HAP-1 (cell line): ENCODE measurements at regions of chr2 and their contacts with region 1.

Region 1: DNA sequence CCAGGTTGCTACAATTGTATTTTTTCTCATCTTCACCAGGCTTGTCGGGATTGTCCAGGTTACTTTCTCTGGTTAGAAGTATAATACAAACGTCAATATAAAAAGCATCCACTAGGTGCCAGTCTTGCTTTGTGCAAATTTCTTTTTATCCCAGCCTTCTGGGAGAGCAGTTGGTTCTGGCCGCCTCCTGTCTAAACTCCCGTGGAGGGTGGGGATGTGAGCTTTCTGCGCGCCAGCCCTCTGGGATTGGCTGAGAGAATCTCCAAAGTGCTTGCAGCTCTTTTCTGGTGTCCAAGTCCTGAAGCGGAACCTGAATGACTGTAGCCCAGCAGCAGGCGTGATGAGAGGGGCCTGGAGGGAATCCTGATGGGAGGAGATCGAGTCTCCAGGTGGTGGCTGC is 22.4 kb upstream of the TOGARAM2 start:
- DNase-seq: peak; percentile 82 to 89
- H3K4me3 ChIP-seq: no peak overlapping the region
- H3K4me1 ChIP-seq: peaks cover 29% of the 10 kb centered on the region
- H3K27me3 ChIP-seq: no peaks in the 10 kb centered on the region

Region 2: GRCh38 chr2:28721601-28722191 is 237.0 kb before region 1 on chr2:
- in situ Hi-C with region 1: no loop called
- DNase-seq: no peak
- H3K4me3 ChIP-seq: no peak overlapping the region
- H3K4me1 ChIP-seq: peaks cover 4% of the 10 kb centered on the region; the same call in 1 of the 2 replicates
- H3K27me3 ChIP-seq: no peaks in the 10 kb centered on the region

Region 3: DNA sequence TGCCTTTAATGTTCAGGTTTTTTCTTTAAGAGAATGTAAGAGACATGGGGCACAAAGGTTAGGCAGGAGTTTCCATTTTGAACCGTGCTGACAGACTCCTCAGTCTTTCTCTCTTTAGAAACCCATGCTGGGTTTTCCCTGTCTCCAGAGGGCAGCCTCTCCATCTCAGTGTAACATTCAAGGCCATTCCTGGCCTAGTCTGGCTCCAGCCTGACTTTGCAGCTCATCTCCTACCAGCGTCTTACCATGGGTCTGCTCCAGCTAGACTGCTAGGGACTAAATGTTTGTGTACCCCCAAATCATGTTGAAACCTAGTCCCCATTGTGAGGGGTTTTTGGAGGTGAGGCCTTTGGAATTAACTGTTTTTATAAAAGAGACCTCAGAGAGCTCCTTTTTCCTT is 146.7 kb after region 1 on chr2:
- in situ Hi-C with region 1: no loop called
- DNase-seq: no peak
- H3K4me3 ChIP-seq: no peak overlapping the region
- H3K4me1 ChIP-seq: peaks cover 2% of the 10 kb centered on the region; the same call in 1 of the 2 replicates
- H3K27me3 ChIP-seq: no peaks in the 10 kb centered on the region

Region 4: DNA sequence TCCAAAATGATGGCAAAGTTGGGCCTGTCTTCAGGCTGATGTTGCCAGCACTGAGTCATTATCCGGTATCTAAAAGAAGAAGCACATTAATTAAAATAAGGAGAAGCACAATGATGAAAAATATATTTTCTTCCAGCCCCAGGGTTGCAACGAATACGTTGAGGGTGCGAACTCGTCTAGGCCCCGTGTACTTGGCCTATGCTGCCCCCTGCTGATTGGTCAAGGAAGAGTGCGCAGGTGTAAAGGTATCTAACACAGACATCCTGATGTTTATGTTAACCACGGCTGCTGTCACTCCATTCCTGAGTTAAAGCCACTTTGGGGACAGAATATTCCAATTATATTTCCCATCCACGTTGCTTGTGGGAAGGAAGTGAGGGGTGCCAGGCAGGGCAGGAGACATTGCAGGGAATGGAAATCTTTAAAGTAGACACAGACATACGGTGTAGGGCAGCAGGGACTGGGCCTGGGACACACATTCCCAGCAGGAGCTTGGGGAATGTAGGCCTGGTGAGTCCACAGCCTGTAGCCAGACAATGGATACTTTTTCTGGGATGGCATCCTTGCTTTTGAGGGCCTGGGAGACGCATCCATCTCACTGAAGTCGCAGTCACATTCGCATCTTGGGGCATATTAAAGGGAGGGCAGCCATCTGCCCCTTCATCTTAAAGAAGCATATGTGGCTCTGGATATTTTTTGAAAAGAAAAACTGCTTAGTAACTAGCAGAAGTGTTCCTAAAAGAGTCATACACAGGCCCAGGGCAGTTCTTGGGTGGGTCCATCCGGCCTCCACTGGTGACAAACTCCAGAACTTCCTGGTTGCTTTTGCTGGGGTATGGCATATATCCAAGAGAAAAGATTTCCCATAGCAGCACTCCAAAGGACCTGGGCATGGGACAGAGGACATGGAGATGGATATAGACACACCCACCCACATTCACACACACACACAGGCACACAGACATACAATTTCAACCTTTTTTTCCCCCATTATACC is 238.4 kb after region 1 on chr2:
- in situ Hi-C with region 1: loop called (anchors 5 kb)
- DNase-seq: peak; percentile 47 to 89
- H3K4me3 ChIP-seq: no peak overlapping the region
- H3K4me1 ChIP-seq: peaks cover 3% of the 10 kb centered on the region
- H3K27me3 ChIP-seq: no peaks in the 10 kb centered on the region

Region 5: DNA sequence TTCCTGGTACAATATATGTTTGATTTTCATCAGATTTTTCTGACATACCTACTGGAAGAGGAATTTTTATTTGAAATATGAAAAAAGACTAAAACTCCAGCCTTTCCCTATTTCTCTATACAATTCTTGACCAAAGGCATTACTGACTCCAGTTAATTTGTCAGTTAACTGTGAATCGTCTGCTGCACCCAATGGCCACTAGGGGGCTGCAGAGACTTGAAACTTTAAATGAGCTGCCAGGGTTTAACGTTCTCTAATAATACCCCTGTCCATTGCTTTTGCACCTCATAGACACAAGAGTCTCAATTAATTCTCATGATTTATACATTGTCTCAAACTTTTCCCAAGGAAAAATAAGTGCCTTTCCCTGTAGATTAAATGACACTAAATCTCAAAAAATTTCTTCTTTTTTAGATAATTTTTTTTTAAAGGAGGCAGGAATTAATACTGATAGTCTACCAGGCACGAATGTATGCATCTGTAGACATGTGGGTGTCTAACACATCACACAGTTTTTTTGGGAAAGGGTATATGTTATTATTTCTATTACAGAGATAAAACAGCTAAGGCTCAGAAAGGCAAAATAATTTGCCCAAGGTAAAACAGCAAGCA is 964.5 kb after region 1 on chr2:
- in situ Hi-C with region 1: loop called (anchors 10 kb)
- DNase-seq: peak; percentile 32 to 70
- H3K4me3 ChIP-seq: no peak overlapping the region
- H3K4me1 ChIP-seq: no peaks in the 10 kb centered on the region
- H3K27me3 ChIP-seq: peaks cover 20% of the 10 kb centered on the region

Region 6: DNA sequence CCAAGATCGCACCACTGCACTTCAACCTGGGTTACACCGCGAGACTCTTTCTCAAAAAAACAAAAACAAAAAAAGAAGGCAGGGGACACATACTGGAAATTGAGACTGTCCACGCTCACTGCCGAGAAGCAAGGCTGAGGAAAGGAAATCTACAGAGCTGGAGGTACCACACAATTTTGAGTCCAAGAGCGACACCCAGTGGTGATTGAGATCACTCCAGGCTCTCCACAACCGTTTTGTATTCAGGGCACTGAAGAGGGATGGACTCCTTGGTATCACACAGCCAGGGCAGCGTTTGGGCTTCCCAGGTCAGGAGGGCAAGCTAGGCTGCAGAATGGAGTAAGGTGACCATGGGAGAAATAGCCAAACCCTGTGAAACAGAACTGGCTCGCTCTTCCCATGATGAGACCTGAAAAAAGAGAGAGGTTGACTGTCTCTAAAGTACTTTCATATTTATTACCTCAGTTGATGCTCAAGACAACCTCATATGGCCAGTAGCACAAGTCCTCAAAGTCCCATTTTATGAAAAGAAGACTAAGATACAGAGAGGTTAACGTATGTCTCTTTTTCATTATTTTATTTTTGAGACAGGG is 1113.7 kb after region 1 on chr2:
- in situ Hi-C with region 1: loop called (anchors 25 kb)
- DNase-seq: peak; percentile 69 to 81
- H3K4me3 ChIP-seq: no peak overlapping the region
- H3K4me1 ChIP-seq: no peaks in the 10 kb centered on the region
- H3K27me3 ChIP-seq: peaks cover 15% of the 10 kb centered on the region; the same call in 1 of the 2 replicates